Transverse colon (tissue), 4 donors: ENCODE measurements at regions of chr3 and their contacts with region 1.

Region 1: DNA sequence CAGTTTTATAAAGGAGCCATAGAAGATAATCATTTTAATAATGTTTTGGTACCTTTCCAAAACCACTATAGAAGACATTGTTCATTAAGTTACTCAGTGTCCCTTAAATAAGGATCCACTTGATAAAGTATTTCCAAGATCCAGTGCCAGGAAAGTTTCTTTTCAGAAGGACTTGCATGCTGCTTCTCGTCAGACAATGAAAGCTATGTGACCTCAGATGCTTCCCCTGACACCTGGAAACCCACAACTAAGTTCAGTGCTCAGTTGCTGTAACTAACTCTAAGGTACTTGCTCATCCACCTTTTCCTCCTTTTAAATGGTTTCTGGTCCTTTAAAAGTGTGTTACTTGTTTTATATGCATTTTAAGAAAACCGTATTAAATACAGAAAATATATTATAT is 7.3 kb downstream of the SSR3 start:
- DNase-seq: no peak
- H3K4me3 ChIP-seq: no peak overlapping the region
- H3K27ac ChIP-seq: peak overlapping the region; percentile 39 to 62 (median 54)
- H3K4me1 ChIP-seq: peaks cover 10 to 68% (median 19%) of the 10 kb centered on the region in 4 donors
- H3K27me3 ChIP-seq: no peaks in the 10 kb centered on the region
- CTCF ChIP-seq: no peak
- EP300 ChIP-seq: no peak
- POLR2A ChIP-seq: no peak

Region 2: DNA sequence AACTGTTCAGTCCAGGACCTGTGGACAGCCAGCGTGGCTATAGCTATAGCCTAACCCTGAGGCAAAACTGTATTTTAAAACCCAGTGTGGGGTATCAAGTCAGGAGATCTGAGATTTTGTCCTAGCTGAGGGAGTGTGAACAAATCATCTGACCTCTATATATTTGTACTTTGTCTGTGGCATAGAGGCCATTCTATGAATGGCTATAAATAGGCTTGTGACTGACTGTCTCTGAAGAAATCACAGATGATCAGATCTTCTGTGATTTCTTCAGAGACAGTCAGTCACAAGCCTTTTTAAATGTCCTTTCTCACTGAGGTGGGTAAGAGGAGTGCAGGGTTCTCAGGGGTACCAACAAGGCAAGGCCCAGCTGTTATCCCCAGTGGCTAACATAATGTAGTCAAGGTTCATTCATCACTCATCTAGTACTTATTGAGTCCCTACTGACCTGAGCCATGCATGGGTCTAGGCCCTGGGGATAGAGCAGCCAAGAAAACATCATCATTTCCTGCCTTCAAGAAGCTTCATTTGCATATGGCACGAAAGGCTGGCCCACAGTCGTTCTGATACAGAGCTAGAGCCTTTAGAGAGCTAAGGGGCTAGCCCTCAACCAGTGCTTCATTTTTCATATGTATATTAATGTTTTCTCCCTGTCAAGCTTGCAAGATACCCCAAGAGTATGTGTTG is 180.0 kb after region 1 on chr3:
- in situ Hi-C with region 1: no loop called
- intact Hi-C with region 1: no loop called
- DNase-seq: no peak
- H3K4me3 ChIP-seq: no peak overlapping the region
- H3K27ac ChIP-seq: no peak overlapping the region
- H3K4me1 ChIP-seq: peaks cover 0 to 9% (median 0%) of the 10 kb centered on the region in 4 donors
- H3K27me3 ChIP-seq: no peaks in the 10 kb centered on the region
- CTCF ChIP-seq: no peak
- EP300 ChIP-seq: no peak
- POLR2A ChIP-seq: no peak

Region 3: DNA sequence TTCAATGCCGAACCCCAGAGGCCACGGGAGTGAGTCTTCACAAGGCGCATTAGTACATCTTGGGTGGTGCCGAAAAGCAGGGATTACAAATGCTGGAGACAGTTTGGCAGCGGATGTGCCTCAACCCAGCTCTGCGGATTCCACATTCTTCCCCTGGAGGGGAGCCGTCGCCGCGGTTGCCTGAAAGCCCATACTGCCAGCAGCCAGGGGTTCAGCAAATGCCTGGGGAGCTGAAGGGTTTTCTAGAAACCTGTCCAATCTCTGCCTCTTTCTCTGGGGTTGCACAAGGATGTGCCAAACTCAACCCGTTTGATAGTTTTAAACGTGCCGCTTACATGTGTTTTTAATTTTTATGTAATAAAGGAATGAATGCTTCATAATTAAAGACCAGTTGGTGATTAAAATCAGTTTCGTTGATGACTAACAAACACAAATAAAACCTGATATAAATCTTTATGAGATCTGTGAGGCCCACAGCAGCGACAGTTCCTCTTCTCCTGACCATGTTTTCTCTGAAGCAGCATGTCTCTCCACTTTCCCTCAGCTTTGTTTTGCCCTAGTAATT is 203.9 kb after region 1 on chr3:
- in situ Hi-C with region 1: no loop called
- intact Hi-C with region 1: no loop called
- DNase-seq: peak; percentile 8
- H3K4me3 ChIP-seq: no peak overlapping the region
- H3K27ac ChIP-seq: no peak overlapping the region
- H3K4me1 ChIP-seq: no peaks in the 10 kb centered on the region
- H3K27me3 ChIP-seq: no peaks in the 10 kb centered on the region
- CTCF ChIP-seq: no peak
- EP300 ChIP-seq: no peak
- POLR2A ChIP-seq: no peak

Region 4: GRCh38 chr3:157130467-157131251 is 583.0 kb after region 1 on chr3:
- in situ Hi-C with region 1: no loop called
- intact Hi-C with region 1: loop called (anchors 10 kb)
- DNase-seq: peak; percentile 92
- H3K4me3 ChIP-seq: no peak overlapping the region
- H3K27ac ChIP-seq: peak overlapping the region; percentile 91 to 94 (median 92)
- H3K4me1 ChIP-seq: peaks cover 30 to 79% (median 56%) of the 10 kb centered on the region in 4 donors
- H3K27me3 ChIP-seq: no peaks in the 10 kb centered on the region
- CTCF ChIP-seq: peak; percentile 57 to 87 (median 63)
- EP300 ChIP-seq: peak; percentile 55
- POLR2A ChIP-seq: peak; percentile 8